Psoas muscle (tissue), 8 donors: ENCODE measurements at regions of chr16 and their contacts with region 1.

Region 1: DNA sequence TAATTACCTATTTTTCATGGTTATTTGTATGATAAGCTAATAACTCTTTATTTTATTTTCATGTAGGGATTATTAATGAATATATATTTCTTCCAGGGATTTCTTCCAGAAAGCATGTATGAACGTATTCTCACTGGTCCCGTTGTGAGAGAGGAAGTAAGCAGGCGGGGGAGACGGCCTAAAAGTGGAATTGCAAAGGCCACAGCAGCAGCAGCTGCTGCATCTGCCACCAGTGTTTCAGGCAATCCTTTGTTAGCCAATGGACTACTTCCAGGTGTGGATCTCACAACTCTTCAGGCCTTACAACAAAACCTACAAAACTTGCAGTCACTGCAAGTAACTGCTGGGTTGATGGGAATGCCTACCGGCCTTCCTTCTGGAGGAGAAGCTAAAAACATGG is 110.3 kb upstream of the RBL2 start:
- DNase-seq: no peak
- ATAC-seq: no peak
- H3K4me3 ChIP-seq: no peak overlapping the region
- H3K27ac ChIP-seq: no peak overlapping the region
- H3K4me1 ChIP-seq: no peaks in the 10 kb centered on the region
- H3K27me3 ChIP-seq: no peaks in the 10 kb centered on the region
- CTCF ChIP-seq: no peak

Region 2: GRCh38 chr16:53257001-53257400 is 66.9 kb before region 1 on chr16:
- intact Hi-C with region 1: no loop called
- DNase-seq: no peak
- ATAC-seq: no peak
- H3K4me3 ChIP-seq: no peak overlapping the region
- H3K27ac ChIP-seq: no peak overlapping the region
- H3K4me1 ChIP-seq: no peaks in the 10 kb centered on the region
- H3K27me3 ChIP-seq: no peaks in the 10 kb centered on the region
- CTCF ChIP-seq: no peak

Region 3: DNA sequence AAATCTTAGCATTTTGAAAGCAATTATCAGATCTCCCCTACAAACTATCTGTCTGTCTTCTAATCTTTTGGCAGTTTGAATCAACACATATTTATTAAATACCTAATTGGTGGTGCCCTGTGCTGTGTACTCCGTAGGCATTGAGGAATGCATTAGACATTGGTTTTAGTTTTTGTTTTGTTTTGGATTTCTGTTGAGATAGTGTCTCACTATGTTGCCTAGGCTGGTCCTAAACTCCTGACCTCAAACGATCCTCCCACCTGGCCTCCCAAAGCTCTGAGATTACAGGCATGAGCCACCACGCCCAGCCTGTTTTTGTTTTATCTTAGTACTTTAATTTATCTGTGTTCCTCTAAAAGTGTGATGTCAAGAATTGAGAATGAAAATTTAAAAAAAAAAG is 14.5 kb before region 1 on chr16:
- intact Hi-C with region 1: loop called in 1 of 2 experiments (anchors 2 kb)
- DNase-seq: no peak
- ATAC-seq: no peak
- H3K4me3 ChIP-seq: no peak overlapping the region
- H3K27ac ChIP-seq: no peak overlapping the region
- H3K4me1 ChIP-seq: peaks cover 9% of the 10 kb centered on the region
- H3K27me3 ChIP-seq: no peaks in the 10 kb centered on the region
- CTCF ChIP-seq: no peak

Region 4: GRCh38 chr16:53457670-53458069 is 133.7 kb after region 1 on chr16:
- intact Hi-C with region 1: loop called in 1 of 2 experiments (anchors 10 kb)
- DNase-seq: no peak
- ATAC-seq: no peak
- H3K4me3 ChIP-seq: no peak overlapping the region
- H3K27ac ChIP-seq: no peak overlapping the region
- H3K4me1 ChIP-seq: no peaks in the 10 kb centered on the region
- H3K27me3 ChIP-seq: no peaks in the 10 kb centered on the region
- CTCF ChIP-seq: no peak

Region 5: DNA sequence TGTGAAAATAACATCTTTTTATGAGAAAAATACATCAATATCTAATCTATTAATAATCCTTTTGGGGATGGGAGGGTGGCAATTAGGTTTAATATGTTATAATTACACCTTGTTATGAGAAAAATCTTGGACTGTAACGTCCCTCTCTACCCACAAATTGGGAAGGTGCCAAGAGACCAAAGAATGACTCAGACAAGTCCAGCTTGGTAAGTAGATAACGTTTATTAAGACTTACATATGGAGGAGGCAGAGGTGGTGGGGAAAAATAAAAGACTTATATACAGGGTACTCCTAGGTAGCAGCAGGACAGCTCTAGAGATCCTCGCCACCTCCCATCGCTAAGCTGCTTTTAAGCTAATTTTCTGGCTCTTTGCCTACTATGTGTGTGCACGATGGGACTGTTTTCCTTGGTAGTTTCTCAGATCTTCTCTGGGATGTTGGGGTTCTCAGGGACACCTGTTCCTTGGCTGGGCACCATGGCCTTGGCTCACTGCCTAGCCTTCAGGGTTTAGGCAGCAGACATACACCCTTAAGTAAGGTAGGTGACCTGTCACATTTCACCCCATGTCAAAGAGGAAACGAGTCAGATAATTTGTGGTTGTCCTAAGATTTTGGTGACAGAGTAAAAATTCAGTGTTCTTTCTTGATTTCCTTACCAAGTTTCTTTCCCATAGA is 141.8 kb after region 1 on chr16:
- intact Hi-C with region 1: loop called in 1 of 2 experiments (anchors 10 kb)
- DNase-seq: no peak
- ATAC-seq: peak in 2 of 4 donors; percentile 53 to 60
- H3K4me3 ChIP-seq: no peak overlapping the region
- H3K27ac ChIP-seq: no peak overlapping the region
- H3K4me1 ChIP-seq: no peaks in the 10 kb centered on the region
- H3K27me3 ChIP-seq: no peaks in the 10 kb centered on the region
- CTCF ChIP-seq: no peak

Region 6: GRCh38 chr16:53495325-53495724 is 171.4 kb after region 1 on chr16:
- intact Hi-C with region 1: loop called in 1 of 2 experiments (anchors 10 kb)
- DNase-seq: no peak
- ATAC-seq: no peak
- H3K4me3 ChIP-seq: no peak overlapping the region
- H3K27ac ChIP-seq: no peak overlapping the region
- H3K4me1 ChIP-seq: peaks cover 7% of the 10 kb centered on the region
- H3K27me3 ChIP-seq: no peaks in the 10 kb centered on the region
- CTCF ChIP-seq: no peak